ENCODE measurements at regions of chr7 and their contacts with region 1.

Region 1: DNA sequence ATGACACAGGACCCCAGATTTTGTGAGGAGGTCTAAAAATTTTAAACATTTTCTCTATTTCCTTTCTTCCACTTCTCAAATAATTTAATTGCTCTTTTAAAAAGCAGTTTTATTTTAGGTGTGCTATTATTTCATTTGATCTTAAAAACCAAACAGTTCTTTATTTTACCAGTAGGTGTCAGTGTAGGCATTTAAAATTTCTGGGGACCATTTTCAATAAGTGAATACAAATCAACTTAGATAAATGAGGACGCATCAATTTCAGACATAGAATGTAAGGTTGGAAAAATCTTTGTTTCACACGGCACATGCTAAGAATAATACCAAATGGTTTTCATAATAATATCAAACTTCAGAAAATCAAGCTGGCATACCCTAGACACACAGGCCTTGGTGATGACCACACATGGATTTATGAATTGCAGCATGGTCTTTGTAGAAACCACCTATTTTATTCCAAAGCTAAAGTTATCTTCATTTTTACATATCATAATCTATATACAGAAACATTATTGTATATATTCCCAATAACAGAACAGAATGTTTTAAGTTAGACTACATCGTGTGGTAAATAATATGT is 127.6 kb upstream of the SLC26A5 start:
- DNase-seq: no peak
- ATAC-seq: no peak

Region 2: GRCh38 chr7:103432712-103433111 is 140.9 kb before region 1 on chr7:
- intact Hi-C with region 1: no loop called
- DNase-seq: no peak
- ATAC-seq: no peak

Region 3: DNA sequence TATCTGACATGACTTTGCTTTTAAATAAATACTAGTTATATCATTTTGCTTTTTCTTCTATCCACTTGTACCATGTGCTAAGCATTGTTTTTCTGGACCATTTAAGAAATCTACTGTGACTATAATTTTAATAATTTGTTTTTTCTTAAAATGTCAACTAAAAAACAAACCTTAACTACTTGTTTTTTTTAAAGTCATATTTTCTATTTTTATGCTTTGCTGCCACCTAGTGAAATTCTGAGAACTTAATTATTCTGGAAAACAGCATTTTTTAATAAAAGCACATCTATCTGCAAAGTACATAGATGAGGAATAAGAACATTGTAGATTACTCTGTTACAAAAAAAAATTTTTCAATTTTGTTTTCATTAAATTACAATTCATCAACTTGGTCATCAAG is 586.8 kb after region 1 on chr7:
- intact Hi-C with region 1: loop called in 1 of 2 experiments (anchors 10 kb)
- DNase-seq: no peak
- ATAC-seq: no peak

Measured in left colon (tissue), 2 donors.